CD4-positive, alpha-beta T cell (primary cell): ENCODE measurements at regions of chr3 and their contacts with region 1.

Region 1: DNA sequence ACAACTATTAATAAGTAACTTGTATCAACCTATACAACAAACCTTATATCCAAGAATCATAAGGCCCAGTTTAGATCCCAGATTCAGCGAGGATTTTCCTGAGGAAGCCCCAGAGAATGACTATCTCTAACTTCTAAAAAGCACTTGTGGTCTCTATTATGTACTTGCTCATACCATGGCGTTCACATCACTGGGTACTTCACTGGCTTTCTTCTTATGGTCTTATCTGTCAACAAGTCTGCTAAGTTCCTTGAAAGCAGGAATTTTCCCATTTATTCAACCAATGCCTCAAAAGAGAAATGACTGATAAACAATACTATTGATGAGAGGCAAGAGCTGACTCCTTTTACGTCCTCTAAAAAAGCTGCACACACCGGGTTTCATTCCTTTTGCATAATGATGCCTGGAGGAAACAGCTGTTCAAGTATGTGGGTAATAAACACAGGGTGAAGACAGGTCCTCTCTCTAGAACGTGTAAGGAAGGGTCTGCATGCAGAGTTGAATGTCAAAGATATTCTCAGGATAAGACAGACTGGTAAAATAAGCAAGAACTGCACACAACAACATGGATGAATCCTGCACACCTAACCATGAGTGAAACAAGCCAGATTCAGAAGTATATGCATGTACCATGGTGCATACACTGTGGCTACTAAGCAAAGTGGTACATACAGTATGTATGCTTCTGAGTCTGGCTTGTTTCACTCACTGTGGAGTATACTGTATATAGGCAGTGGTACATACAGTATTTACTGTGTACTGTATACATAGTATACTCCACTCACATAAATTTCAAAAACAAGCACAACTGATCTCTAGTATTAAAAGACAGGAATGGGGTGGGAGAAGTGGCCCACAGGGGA is 408.7 kb downstream of the SHQ1 start:
- DNase-seq: no peak
- ATAC-seq: peak; percentile 33
- H3K4me3 ChIP-seq: no peak overlapping the region
- H3K4me3 Mint-ChIP-seq: peak overlapping the region; percentile 27
- H3K27ac ChIP-seq: no peak overlapping the region
- H3K27ac Mint-ChIP-seq: no peak overlapping the region
- H3K4me1 ChIP-seq: peaks cover 13% of the 10 kb centered on the region
- H3K4me1 Mint-ChIP-seq: peaks cover 87% of the 10 kb centered on the region
- H3K27me3 ChIP-seq: no peaks in the 10 kb centered on the region
- H3K27me3 Mint-ChIP-seq: no peaks in the 10 kb centered on the region
- CTCF ChIP-seq: no peak

Region 2: GRCh38 chr3:72353236-72354128 is 86.1 kb before region 1 on chr3:
- CTCF ChIA-PET with region 1: no interaction called
- POLR2A ChIA-PET with region 1: no interaction called
- intact Hi-C with region 1: loop called in 1 of 2 experiments (anchors 5 kb)
- DNase-seq: no peak
- ATAC-seq: no peak
- H3K4me3 ChIP-seq: no peak overlapping the region
- H3K4me3 Mint-ChIP-seq: no peak overlapping the region
- H3K27ac ChIP-seq: no peak overlapping the region
- H3K27ac Mint-ChIP-seq: no peak overlapping the region
- H3K4me1 ChIP-seq: no peaks in the 10 kb centered on the region
- H3K4me1 Mint-ChIP-seq: peaks cover 12% of the 10 kb centered on the region
- H3K27me3 ChIP-seq: no peaks in the 10 kb centered on the region
- H3K27me3 Mint-ChIP-seq: no peaks in the 10 kb centered on the region
- CTCF ChIP-seq: no peak

Region 3: GRCh38 chr3:72375237-72376076 is 64.1 kb before region 1 on chr3:
- CTCF ChIA-PET with region 1: no interaction called
- POLR2A ChIA-PET with region 1: no interaction called
- intact Hi-C with region 1: loop called in 1 of 2 experiments (anchors 5 kb)
- DNase-seq: peak in 4 of 14 experiments; percentile 7 to 37 (median 34)
- ATAC-seq: peak; percentile 83
- H3K4me3 ChIP-seq: no peak overlapping the region
- H3K4me3 Mint-ChIP-seq: peak overlapping the region; percentile 1
- H3K27ac ChIP-seq: no peak overlapping the region
- H3K27ac Mint-ChIP-seq: peak overlapping the region; percentile 28
- H3K4me1 ChIP-seq: peaks cover 10% of the 10 kb centered on the region
- H3K4me1 Mint-ChIP-seq: peaks cover 73% of the 10 kb centered on the region
- H3K27me3 ChIP-seq: no peaks in the 10 kb centered on the region
- H3K27me3 Mint-ChIP-seq: no peaks in the 10 kb centered on the region
- CTCF ChIP-seq: no peak

Region 4: GRCh38 chr3:72405943-72406566 is 33.5 kb before region 1 on chr3:
- CTCF ChIA-PET with region 1: no interaction called
- POLR2A ChIA-PET with region 1: no interaction called
- intact Hi-C with region 1: loop called in 1 of 2 experiments (anchors 5 kb)
- DNase-seq: no peak
- ATAC-seq: no peak
- H3K4me3 ChIP-seq: no peak overlapping the region
- H3K4me3 Mint-ChIP-seq: no peak overlapping the region
- H3K27ac ChIP-seq: no peak overlapping the region
- H3K27ac Mint-ChIP-seq: no peak overlapping the region
- H3K4me1 ChIP-seq: peaks cover 19% of the 10 kb centered on the region
- H3K4me1 Mint-ChIP-seq: peaks cover 97% of the 10 kb centered on the region
- H3K27me3 ChIP-seq: no peaks in the 10 kb centered on the region
- H3K27me3 Mint-ChIP-seq: no peaks in the 10 kb centered on the region
- CTCF ChIP-seq: no peak

Region 5: DNA sequence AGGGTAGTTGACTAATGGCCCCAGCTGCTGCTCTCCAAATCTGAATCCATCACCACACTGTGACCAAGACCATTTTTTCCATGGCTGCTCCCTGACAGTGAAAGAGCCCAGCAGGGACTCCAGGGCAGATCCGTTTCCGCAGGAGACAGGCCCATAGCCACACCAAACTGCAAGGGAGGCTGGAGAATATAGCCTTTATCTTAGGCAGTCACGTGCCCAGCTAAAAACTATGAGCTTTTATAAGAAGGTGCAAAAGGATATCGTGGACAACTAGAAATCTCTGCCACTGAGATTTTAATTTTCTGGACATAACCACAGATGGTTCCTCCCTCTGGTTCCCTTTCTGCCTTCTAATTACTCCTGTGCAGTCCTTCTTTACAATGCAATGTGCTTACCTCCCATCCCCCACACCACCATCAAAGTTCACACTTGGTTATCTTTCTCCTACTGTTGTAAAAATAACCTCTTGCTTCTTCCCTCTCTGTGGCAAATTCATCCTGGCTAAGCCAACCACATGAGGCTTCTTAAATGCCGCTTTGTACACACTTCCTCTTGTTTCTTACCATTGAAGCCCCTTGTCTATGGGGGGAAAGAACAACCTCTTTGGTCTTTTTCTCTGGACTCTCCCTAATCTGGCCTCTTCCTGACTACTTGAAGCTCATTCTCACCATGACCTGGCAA is 175.0 kb after region 1 on chr3:
- CTCF ChIA-PET with region 1: no interaction called
- POLR2A ChIA-PET with region 1: no interaction called
- intact Hi-C with region 1: no loop called
- DNase-seq: no peak
- ATAC-seq: no peak
- H3K4me3 ChIP-seq: no peak overlapping the region
- H3K4me3 Mint-ChIP-seq: no peak overlapping the region
- H3K27ac ChIP-seq: no peak overlapping the region
- H3K27ac Mint-ChIP-seq: no peak overlapping the region
- H3K4me1 ChIP-seq: no peaks in the 10 kb centered on the region
- H3K4me1 Mint-ChIP-seq: peaks cover 6% of the 10 kb centered on the region
- H3K27me3 ChIP-seq: no peaks in the 10 kb centered on the region
- H3K27me3 Mint-ChIP-seq: no peaks in the 10 kb centered on the region
- CTCF ChIP-seq: no peak